Pancreas (tissue), 10 donors: ENCODE measurements at regions of chr6 and their contacts with region 1.

Region 1: GRCh38 chr6:30483677-30484279 is 5.5 kb upstream of the HLA-E start:
- DNase-seq: peak in 1 of 6 donors; percentile 36
- ATAC-seq: peak in 3 of 4 donors; percentile 55 to 64 (median 63)
- H3K4me3 ChIP-seq: no peak overlapping the region
- H3K27ac ChIP-seq: no peak overlapping the region
- H3K4me1 ChIP-seq: no peaks in the 10 kb centered on the region
- H3K27me3 ChIP-seq: peaks cover 0 to 11% (median 0%) of the 10 kb centered on the region in 4 donors
- CTCF ChIP-seq: peak in 3 of 4 donors; percentile 35 to 39 (median 37)

Region 2: DNA sequence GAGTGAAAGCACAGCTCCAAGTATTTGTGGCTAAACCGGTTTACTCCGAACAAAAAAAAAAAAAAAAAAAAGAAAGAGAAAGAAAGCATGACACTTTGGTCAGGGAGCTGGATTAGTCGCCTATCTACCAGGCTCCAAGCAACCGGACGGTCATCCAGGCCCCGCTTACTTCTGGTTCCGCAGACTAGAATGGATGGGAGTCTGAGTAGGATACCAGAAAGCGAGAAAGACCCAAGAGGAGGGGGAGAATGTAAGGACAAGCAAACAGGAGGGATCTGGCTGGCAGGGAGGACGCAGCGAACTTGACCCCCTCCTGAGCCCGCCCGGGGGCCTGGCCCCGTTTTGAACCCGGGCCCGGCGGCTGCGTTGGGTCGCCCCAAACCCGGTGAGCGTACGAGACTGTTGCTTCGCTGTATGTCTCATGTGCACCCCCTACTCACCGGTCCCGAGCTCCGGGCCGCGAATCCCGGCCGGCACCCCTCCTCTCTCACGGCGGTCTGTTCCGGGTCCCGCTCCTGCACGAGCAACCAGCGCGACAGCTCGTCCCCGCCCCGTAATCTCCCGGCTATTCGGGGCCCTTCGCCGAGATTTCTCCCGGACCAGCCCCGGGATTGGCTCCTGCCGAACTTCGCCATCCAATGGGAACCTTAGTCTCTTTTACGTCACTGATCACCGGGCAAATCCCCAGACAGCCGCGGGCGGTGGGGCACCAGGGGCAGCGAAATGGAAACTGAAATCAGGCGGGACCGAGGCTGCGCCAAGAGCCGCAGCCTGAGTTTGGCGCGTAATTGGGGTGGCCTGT is 270.7 kb before region 1 on chr6 and contains the start of gene TRIM26:
- intact Hi-C with region 1: no loop called
- DNase-seq: peak; percentile 95 to 98 (median 97)
- ATAC-seq: peak; percentile 90 to 98 (median 94)
- H3K4me3 ChIP-seq: peak within 1 kb of the TSS; percentile 73 to 95 (median 80)
- H3K27ac ChIP-seq: peak within 1 kb of the TSS; percentile 86 to 99 (median 96)
- H3K4me1 ChIP-seq: peaks cover 5 to 25% (median 20%) of the 10 kb centered on the region in 3 donors
- H3K27me3 ChIP-seq: no peaks in the 10 kb centered on the region
- CTCF ChIP-seq: no peak
- total RNA-seq, gene TRIM26: 12.1 to 25.3 (median 18.7) TPM

Region 3: GRCh38 chr6:30533460-30534294 is 49.9 kb after region 1 on chr6:
- intact Hi-C with region 1: loop called in 2 of 3 experiments (anchors 5 to 10 kb)
- DNase-seq: no peak
- ATAC-seq: no peak
- H3K4me3 ChIP-seq: no peak overlapping the region
- H3K27ac ChIP-seq: no peak overlapping the region
- H3K4me1 ChIP-seq: no peaks in the 10 kb centered on the region
- H3K27me3 ChIP-seq: no peaks in the 10 kb centered on the region
- CTCF ChIP-seq: no peak

Region 4: DNA sequence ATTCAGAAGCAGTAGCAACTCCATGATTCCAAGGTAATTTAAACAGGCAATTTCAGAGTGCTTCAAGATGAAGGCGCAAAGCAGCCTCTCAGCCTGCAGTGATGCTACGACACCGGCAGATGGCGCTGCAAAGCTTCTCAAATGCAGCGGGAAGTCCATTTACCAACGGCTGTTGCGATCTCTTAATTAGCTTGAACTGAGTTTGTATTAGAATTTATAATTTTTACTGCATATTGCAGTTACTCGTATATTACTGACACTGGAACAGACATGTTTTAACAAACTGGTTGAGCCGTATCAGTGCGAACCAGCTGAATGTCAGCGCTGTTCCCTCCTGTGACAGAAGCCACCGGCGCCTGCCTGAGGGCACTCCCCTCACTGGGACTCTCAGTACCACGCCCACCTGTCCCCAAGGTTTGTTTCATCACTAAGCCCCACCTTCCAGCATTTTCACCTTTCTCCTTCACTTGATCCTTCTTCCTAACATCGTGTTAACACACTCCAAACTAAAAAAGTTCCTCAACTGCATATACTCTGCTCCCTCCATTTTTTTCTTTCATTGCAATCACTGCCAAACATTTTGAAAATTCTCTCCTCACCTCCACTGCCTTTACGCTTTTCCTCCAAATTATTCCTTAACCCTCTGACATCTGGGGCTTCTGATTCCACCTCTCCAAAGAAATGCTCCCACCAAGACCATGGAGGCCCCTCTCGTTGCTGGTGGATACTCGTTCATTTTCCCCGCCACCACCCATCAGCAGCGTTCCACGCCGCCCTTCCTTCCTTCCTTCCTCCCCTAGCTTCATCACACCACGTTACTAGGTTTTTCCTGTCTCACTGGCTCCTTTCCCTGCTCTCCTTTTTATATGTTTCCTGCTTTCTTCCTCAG is 58.0 kb after region 1 on chr6:
- intact Hi-C with region 1: loop called (anchors 5 to 10 kb)
- DNase-seq: peak; percentile 54 to 85 (median 76)
- ATAC-seq: peak; percentile 66 to 95 (median 88)
- H3K4me3 ChIP-seq: peak overlapping the region in 2 of 4 donors; percentile 10 to 24
- H3K27ac ChIP-seq: no peak overlapping the region
- H3K4me1 ChIP-seq: peaks cover 0 to 4% (median 3%) of the 10 kb centered on the region in 3 donors
- H3K27me3 ChIP-seq: no peaks in the 10 kb centered on the region
- CTCF ChIP-seq: peak; percentile 91 to 97 (median 94)

Region 5: GRCh38 chr6:31004285-31004684 is 520.5 kb after region 1 on chr6:
- intact Hi-C with region 1: no loop called
- DNase-seq: no peak
- ATAC-seq: peak in 2 of 4 donors; percentile 52 to 59
- H3K4me3 ChIP-seq: no peak overlapping the region
- H3K27ac ChIP-seq: peak overlapping the region in 1 of 4 donors; percentile 22
- H3K4me1 ChIP-seq: peaks cover 0 to 3% (median 0%) of the 10 kb centered on the region in 3 donors
- H3K27me3 ChIP-seq: no peaks in the 10 kb centered on the region
- CTCF ChIP-seq: no peak